ENCODE measurements at regions of chr11 and their contacts with region 1.

Region 1: GRCh38 chr11:65225279-65226102 is 36.3 kb upstream of the POLA2 start:
- DNase-seq: peak; percentile 42 to 80 (median 58)
- ATAC-seq: peak; percentile 92
- H3K4me3 ChIP-seq: peak overlapping the region; percentile 49
- H3K4me3 Mint-ChIP-seq: peak overlapping the region; percentile 68
- H3K27ac ChIP-seq: no peak overlapping the region
- H3K27ac Mint-ChIP-seq: no peak overlapping the region
- H3K4me1 ChIP-seq: peaks cover 14% of the 10 kb centered on the region
- H3K4me1 Mint-ChIP-seq: peaks cover 12% of the 10 kb centered on the region
- H3K27me3 ChIP-seq: peaks cover 14 to 17% of the 10 kb centered on the region in 2 experiments
- H3K27me3 Mint-ChIP-seq: peaks cover 24% of the 10 kb centered on the region
- CTCF ChIP-seq: no peak

Region 2: GRCh38 chr11:65261591-65262380 is 36.3 kb after region 1 on chr11 and contains the start of gene POLA2:
- CTCF ChIA-PET with region 1: no interaction called
- POLR2A ChIA-PET with region 1: interaction called, 11 read pairs
- intact Hi-C with region 1: no loop called
- DNase-seq: peak; percentile 90 to 99 (median 96)
- ATAC-seq: peak; percentile 88
- H3K4me3 ChIP-seq: peak within 1 kb of the TSS; percentile 84
- H3K4me3 Mint-ChIP-seq: peak within 1 kb of the TSS; percentile 92
- H3K27ac ChIP-seq: peak within 1 kb of the TSS; percentile 84 to 89
- H3K27ac Mint-ChIP-seq: peak within 1 kb of the TSS; percentile 91
- H3K4me1 ChIP-seq: peaks cover 31% of the 10 kb centered on the region
- H3K4me1 Mint-ChIP-seq: peaks cover 54% of the 10 kb centered on the region
- H3K27me3 ChIP-seq: no peaks in the 10 kb centered on the region
- H3K27me3 Mint-ChIP-seq: no peaks in the 10 kb centered on the region
- CTCF ChIP-seq: no peak
- total RNA-seq, gene POLA2: 9.6 to 10.6 TPM

Region 3: GRCh38 chr11:65516135-65516935 is 290.8 kb after region 1 on chr11:
- CTCF ChIA-PET with region 1: no interaction called
- POLR2A ChIA-PET with region 1: no interaction called
- intact Hi-C with region 1: loop called in 1 of 2 experiments (anchors 10 kb)
- DNase-seq: no peak
- ATAC-seq: peak; percentile 24
- H3K4me3 ChIP-seq: no peak overlapping the region
- H3K4me3 Mint-ChIP-seq: no peak overlapping the region
- H3K27ac ChIP-seq: no peak overlapping the region
- H3K27ac Mint-ChIP-seq: peak overlapping the region; percentile 49
- H3K4me1 ChIP-seq: peaks cover 5% of the 10 kb centered on the region
- H3K4me1 Mint-ChIP-seq: peaks cover 11% of the 10 kb centered on the region
- H3K27me3 ChIP-seq: no peaks in the 10 kb centered on the region
- H3K27me3 Mint-ChIP-seq: no peaks in the 10 kb centered on the region
- CTCF ChIP-seq: no peak

Measured in CD4-positive, alpha-beta T cell (primary cell).